K562 (cell line): ENCODE measurements at regions of chr22 and their contacts with region 1.

Region 1: GRCh38 chr22:37561212-37562048 is 1.1 kb downstream of the CDC42EP1 start:
- DNase-seq: peak; percentile 75 to 92 (median 84)
- ATAC-seq: peak; percentile 69
- H3K4me3 ChIP-seq: peak overlapping the region; percentile 83
- H3K27ac ChIP-seq: peak overlapping the region; percentile 97
- H3K4me1 ChIP-seq: peaks cover 26 to 45% of the 10 kb centered on the region in 2 experiments
- H3K27me3 ChIP-seq: no peaks in the 10 kb centered on the region
- CTCF ChIP-seq: peak; percentile 70 to 84 (median 73)
- EP300 ChIP-seq: no peak
- POLR2A ChIP-seq: peak; percentile 61; the same call in 1 of the 2 replicates
- RAD21 ChIP-seq: peak; percentile 27 to 36

Region 2: GRCh38 chr22:37218771-37219411 is 342.5 kb before region 1 on chr22:
- CTCF ChIA-PET with region 1: no interaction called
- POLR2A ChIA-PET with region 1: no interaction called
- in situ Hi-C with region 1: no loop called
- intact Hi-C with region 1: no loop called
- DNase-seq: no peak
- ATAC-seq: no peak
- H3K4me3 ChIP-seq: no peak overlapping the region
- H3K27ac ChIP-seq: no peak overlapping the region
- H3K4me1 ChIP-seq: no peaks in the 10 kb centered on the region; a peak in 2 of 5 replicates
- H3K27me3 ChIP-seq: peaks cover 0 to 2% of the 10 kb centered on the region in 2 experiments; a peak in 2 of 5 replicates
- CTCF ChIP-seq: no peak
- EP300 ChIP-seq: no peak
- POLR2A ChIP-seq: no peak
- RAD21 ChIP-seq: no peak

Region 3: GRCh38 chr22:37591823-37592404 is 30.5 kb after region 1 on chr22:
- CTCF ChIA-PET with region 1: no interaction called
- POLR2A ChIA-PET with region 1: interaction called, 10 read pairs
- in situ Hi-C with region 1: no loop called
- intact Hi-C with region 1: no loop called
- DNase-seq: no peak
- ATAC-seq: no peak
- H3K4me3 ChIP-seq: no peak overlapping the region
- H3K27ac ChIP-seq: no peak overlapping the region
- H3K4me1 ChIP-seq: no peaks in the 10 kb centered on the region; a peak in 2 of 5 replicates
- H3K27me3 ChIP-seq: peaks cover 2 to 12% of the 10 kb centered on the region in 2 experiments; a peak in 3 of 5 replicates
- CTCF ChIP-seq: no peak
- EP300 ChIP-seq: no peak
- POLR2A ChIP-seq: no peak
- RAD21 ChIP-seq: no peak